ENCODE measurements at regions of chr17 and their contacts with region 1.

Region 1: GRCh38 chr17:8243827-8244226 is 4.0 kb downstream of the CTC1 start:
- DNase-seq: no peak
- ATAC-seq: no peak
- H3K4me3 Mint-ChIP-seq: peak overlapping the region in 9 of 10 donors; percentile 37 to 95 (median 64)
- H3K27ac Mint-ChIP-seq: peak overlapping the region; percentile 72 to 99 (median 84)
- H3K4me1 Mint-ChIP-seq: peaks cover 23 to 66% (median 50%) of the 10 kb centered on the region in 4 donors
- H3K27me3 Mint-ChIP-seq: no peaks in the 10 kb centered on the region

Region 2: GRCh38 chr17:8294814-8295316 is 51.0 kb after region 1 on chr17:
- POLR2A ChIA-PET with region 1: interaction called, 67 read pairs
- DNase-seq: no peak
- ATAC-seq: no peak
- H3K4me3 Mint-ChIP-seq: peak overlapping the region; percentile 88 to 97 (median 94)
- H3K27ac Mint-ChIP-seq: peak overlapping the region; percentile 84 to 97 (median 95)
- H3K4me1 Mint-ChIP-seq: peaks cover 20 to 39% (median 31%) of the 10 kb centered on the region in 4 donors
- H3K27me3 Mint-ChIP-seq: no peaks in the 10 kb centered on the region

Region 3: DNA sequence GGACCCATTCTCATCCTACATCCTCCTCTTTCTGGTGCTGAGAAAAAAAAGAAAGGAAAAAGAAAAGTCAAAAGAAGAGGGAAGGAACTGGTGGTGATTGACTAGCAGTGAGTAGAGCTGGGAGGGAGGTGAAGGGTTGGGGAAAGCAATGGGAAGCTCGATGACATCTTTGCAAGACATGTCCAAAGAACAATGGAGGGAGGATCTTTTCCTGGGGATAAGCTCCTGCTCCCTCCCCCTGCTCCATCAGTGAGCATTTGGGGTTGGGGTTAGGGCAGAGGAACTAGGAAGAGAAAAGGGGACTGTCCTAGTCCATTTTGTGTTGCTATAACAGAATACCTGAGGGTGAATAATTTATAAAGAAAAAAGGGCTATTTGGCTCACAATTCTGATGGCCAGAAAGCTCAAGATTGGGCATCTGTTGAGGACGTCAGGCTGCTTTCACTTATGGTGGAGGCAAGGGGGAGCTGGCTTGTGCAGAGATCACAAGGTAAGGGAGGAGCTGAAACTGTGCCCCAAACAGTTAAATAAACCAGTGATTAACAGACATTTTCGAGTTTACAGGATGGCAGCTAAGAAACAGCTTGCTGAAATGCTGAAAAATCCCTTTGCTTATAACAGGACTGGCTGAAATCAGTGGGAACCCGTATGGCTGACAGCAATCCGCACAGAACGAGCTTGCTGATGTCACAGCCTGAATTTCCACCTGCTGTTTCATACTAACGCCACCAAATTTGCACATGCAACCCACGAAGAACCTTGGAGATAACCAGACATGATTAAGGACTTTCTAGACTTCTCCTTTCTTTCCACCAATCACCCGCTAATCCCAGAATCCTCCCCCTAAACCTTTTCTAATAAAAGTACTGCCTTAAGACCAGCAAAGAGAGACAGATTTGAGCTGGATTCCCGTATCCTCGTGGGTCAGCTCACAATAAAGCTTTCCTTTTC is 94.2 kb after region 1 on chr17:
- POLR2A ChIA-PET with region 1: no interaction called
- DNase-seq: peak in 1 of 10 donors; percentile 9
- ATAC-seq: peak in 1 of 2 donors; percentile 46
- H3K4me3 Mint-ChIP-seq: peak overlapping the region in 6 of 10 donors; percentile 4 to 42 (median 22)
- H3K27ac Mint-ChIP-seq: peak overlapping the region in 3 of 10 donors; percentile 17 to 76 (median 45)
- H3K4me1 Mint-ChIP-seq: peaks cover 7 to 11% (median 9%) of the 10 kb centered on the region in 4 donors
- H3K27me3 Mint-ChIP-seq: peaks cover 1 to 14% (median 4%) of the 10 kb centered on the region in 5 donors

Region 4: DNA sequence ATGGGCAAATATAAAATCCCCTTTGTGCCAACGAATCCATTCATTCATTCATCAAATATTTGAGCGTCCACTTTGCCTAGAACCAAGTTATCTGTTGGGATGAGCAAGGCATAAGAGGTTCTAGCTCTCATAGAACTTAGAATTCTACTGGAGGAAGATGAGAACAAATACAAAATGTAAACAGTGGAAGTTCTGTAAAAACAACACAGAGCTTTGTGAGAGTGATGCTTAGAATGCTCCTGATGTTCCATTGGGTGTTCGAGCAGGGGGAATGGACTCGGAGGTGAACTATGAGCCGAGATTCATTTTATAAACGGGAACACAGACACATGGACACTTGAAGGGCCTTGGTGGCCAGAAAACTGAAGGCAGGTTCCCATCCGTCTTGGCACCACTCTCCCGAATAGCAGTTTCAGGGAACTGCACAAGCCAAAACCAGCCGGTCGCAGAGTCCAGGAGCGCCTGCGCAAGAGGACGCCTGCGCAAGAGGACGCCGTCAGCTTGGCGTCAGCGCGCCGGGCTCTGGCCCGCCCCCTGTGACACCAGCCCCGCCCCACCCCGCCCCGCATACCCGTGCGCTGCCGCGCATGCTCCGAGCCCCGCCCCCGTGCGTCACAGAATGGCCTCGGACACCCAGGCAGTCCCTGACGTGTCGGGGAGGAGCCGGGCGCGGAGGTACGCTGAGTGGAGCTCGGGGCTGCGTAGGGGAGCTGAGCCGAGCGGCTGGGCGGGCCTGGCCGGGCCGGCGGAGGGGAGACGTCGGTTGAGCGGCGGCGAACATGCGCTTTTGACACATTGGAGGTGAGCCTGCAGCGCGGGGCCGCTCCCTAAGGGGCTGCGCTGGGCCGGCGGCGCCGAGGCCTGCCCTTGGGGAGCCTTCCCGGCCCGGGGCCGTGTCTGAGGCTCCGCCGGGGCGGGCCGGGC is 191.7 kb after region 1 on chr17 and contains the start of gene NDEL1:
- POLR2A ChIA-PET with region 1: no interaction called
- DNase-seq: peak; percentile 94 to 99 (median 99)
- ATAC-seq: peak; percentile 94 to 95
- H3K4me3 Mint-ChIP-seq: peak within 1 kb of the TSS; percentile 92 to 100 (median 96)
- H3K27ac Mint-ChIP-seq: peak within 1 kb of the TSS; percentile 83 to 100 (median 98)
- H3K4me1 Mint-ChIP-seq: peaks cover 11 to 44% (median 33%) of the 10 kb centered on the region in 4 donors
- H3K27me3 Mint-ChIP-seq: no peaks in the 10 kb centered on the region
- polyA plus RNA-seq, gene NDEL1: 40.3 to 56.8 (median 47.8) TPM

Measured in naive thymus-derived CD8-positive, alpha-beta T cell (primary cell).